ENCODE measurements at regions of chr17 and their contacts with region 1.

Region 1: DNA sequence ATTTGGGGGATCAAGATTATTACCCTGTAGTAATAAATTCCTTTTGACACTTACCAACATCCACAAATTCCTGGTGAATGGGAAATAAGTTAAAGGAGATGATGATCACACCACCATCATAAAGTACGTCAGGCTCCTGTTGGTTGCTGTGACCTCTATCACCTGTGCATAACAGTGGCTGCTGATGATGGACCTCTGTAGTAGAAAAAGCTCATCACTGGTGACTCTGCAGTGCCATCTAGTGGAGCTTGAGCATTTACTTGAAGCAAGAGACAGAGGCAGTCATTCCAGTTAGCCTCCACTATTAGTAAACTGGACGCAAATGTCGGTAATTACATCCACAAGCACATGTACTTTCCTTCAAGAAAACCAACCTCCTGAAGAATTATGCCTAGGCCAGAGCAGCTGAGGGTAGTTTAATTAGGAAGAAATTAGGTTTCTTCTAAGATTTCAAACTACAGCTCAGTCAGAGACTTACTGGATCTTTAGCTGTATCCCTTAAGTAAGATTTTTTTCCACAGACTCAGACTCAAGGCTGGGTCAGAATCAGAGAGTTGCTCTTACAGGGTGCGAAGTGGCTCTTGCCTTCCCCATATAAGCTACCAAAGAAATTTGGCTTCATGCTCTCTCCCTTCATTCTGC is 39.3 kb downstream of the CYB561 start:
- DNase-seq: peak; percentile 71
- ATAC-seq: peak; percentile 88

Region 2: DNA sequence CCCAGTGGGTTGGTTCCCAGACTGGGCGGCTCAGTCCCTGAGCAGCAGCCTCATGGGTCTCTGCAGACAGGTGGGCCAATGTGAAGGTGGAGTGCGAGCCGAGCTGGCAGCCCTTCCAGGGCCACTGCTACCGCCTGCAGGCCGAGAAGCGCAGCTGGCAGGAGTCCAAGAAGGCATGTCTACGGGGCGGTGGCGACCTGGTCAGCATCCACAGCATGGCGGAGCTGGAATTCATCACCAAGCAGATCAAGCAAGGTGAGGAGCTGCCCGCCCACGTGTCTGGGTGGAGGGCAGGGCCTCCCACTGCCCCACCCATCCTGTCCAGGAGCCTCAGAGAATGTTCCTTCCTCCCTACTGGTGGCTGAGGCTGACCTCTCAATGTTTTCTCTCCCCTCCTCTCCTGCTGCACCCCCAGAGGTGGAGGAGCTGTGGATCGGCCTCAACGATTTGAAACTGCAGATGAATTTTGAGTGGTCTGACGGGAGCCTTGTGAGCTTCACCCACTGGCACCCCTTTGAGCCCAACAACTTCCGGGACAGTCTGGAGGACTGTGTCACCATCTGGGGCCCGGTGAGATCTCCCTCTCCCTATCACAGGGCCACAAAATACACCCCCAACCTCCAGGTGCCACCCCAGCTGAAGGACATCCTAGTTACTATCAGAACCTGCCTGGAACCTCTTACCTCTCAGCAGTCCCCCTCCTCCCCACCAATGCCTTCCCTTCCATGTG is 735.1 kb before region 1 on chr17:
- intact Hi-C with region 1: loop called (anchors 10 kb)
- DNase-seq: no peak
- ATAC-seq: no peak

Region 3: DNA sequence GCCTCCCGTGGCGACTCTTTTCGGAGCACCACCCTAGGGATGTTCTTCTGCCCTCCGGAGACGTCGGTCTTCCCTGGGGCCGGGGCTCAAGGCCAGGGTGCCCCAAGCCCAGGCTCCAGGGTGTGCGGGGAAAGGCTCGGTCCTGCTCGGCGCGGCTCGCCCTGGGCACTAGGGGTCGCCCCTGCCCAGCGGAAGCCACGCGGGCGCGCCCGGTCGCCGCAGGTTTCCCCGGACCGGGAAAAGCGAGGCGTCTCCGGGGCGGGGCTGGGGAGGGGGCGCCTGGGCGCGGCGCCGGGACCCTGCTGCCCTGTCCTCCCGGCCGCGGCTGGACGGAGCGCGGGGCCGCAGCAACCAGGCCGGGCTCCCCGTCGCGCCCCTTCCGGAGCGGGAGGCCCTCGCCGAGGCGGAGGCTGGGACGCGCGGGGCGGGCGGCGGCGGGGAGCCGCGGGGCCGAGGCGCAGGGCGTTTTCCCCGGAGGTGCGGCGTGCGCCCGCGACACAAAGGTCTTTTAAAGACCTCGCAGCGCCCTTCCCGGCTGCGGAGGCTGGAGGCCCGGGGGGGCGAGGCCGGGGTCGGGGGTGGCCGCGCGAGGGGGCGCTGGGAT is 702.9 kb before region 1 on chr17:
- intact Hi-C with region 1: loop called in 1 of 2 experiments (anchors 5 kb)
- DNase-seq: peak; percentile 82
- ATAC-seq: peak; percentile 92 to 93

Region 4: DNA sequence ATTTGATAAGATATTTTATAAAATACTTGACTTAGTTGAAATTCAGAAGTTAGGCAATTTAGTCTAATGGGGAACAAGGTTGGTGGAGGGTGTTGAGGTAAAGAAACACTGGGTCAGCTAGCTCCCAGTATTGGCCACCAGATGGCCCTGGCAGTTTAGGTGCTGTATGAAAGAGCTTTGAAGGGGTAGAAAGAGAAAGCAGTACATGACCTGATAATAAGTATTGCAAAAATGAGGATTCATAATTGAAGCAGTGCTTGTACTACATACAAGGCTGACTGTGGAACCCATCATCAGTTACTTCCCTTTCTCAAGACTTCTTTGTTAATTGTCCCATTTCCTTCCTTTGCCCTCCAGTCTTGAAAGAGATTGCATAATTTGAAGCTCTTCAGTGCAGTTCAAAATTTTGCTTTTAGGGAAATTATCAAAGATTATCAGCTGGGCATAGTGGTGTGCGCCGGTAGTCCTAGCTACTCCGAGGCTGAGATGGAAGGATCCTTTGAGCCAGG is 411.4 kb before region 1 on chr17:
- intact Hi-C with region 1: loop called in 1 of 2 experiments (anchors 10 kb)
- DNase-seq: no peak
- ATAC-seq: peak; percentile 55 to 69

Region 5: DNA sequence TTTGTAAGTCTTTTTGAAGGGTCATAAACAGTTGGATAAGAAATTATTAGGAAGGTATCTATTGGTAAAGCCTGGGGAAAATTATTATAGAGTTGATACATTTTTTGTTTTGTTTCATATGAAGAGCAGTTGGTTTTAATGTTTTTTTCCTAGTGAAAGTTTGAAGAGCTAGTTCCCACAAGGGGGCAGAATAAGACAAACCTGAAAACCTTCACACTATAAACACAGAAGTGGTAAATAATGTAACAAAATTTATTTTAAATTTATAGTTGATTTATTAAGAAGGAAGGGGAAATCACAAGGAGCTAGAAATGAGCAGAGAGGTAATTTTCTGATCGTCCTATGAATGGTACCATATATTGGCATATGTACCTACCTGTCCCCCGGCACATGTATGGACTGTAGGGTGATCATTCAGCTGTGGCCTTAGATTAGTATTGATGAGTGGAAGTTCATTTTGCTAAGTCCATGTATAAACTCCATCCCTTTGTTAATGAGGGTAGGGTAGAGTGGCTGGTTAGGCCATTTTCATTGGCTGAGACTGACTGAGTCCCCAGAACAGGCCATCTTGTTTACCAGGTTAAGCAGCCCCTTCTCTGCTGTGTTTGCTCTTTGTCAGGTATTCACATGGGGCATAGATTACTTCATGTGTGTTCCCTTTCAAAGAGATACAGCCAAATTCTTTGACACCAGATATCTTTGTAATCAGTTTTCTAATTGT is 324.4 kb before region 1 on chr17:
- intact Hi-C with region 1: loop called in 1 of 2 experiments (anchors 5 kb)
- DNase-seq: no peak
- ATAC-seq: no peak

Measured in left cardiac atrium (tissue), 4 donors.